Calu3 (cell line): ENCODE measurements at regions of chr1 and their contacts with region 1.

Region 1: DNA sequence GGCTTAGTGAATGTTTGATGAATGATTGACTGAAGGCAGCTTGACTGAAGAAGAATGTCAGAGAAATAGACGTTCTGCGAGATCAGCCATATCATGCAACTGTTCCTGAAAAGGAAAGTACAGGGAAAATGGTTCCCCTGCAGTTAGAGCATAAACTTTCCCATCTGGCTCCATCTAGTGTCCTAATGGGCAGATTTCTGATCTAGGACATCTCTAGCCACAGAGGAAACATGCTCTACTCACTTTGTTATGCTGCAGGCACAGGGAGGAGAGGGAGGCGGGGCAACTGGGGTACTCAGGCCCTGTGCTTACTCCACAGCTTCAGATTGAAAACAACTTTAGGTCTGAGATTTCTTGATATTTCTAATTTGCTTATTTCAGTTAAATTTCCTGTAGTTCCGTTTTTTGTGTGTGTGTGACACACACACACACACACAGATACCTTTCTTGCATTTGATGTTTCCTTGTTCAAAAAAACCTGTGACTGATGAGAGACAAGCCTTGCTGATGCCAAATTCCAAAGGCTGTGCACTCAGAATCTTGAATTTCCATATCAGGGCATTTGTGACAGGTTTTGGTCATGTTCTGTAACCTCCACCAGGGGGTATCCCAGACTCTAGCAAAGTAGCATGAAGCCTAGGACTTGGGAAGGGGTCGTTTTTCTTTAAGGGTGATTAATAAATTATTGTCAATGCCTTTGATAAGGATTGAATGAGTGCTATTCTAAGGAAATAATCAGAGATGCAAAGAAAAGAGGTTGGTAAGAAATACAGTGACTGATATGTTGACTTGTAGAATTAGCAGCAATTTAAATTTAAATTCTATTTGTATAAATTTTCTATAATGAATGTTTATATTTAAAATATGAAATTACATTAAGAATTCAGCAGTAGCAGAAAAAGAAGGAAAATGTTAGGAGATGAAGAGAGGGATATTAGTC is 139.7 kb upstream of the BEND5 start:
- DNase-seq: peak; percentile 53
- H3K4me3 Mint-ChIP-seq: no peak overlapping the region
- H3K27ac Mint-ChIP-seq: peak overlapping the region; percentile 5
- H3K4me1 Mint-ChIP-seq: peaks cover 17% of the 10 kb centered on the region
- H3K27me3 Mint-ChIP-seq: no peaks in the 10 kb centered on the region
- CTCF ChIP-seq: peak; percentile 46

Region 2: GRCh38 chr1:48853006-48853405 is 63.4 kb before region 1 on chr1:
- CTCF ChIA-PET with region 1: no interaction called
- intact Hi-C with region 1: loop called (anchors 10 kb)
- DNase-seq: no peak
- H3K4me3 Mint-ChIP-seq: no peak overlapping the region
- H3K27ac Mint-ChIP-seq: no peak overlapping the region
- H3K4me1 Mint-ChIP-seq: no peaks in the 10 kb centered on the region
- H3K27me3 Mint-ChIP-seq: no peaks in the 10 kb centered on the region
- CTCF ChIP-seq: no peak

Region 3: GRCh38 chr1:49229555-49229954 is 313.2 kb after region 1 on chr1:
- CTCF ChIA-PET with region 1: no interaction called
- intact Hi-C with region 1: loop called (anchors 5 kb)
- DNase-seq: peak; percentile 60
- H3K4me3 Mint-ChIP-seq: no peak overlapping the region
- H3K27ac Mint-ChIP-seq: no peak overlapping the region
- H3K4me1 Mint-ChIP-seq: peaks cover 19% of the 10 kb centered on the region
- H3K27me3 Mint-ChIP-seq: no peaks in the 10 kb centered on the region
- CTCF ChIP-seq: no peak

Region 4: DNA sequence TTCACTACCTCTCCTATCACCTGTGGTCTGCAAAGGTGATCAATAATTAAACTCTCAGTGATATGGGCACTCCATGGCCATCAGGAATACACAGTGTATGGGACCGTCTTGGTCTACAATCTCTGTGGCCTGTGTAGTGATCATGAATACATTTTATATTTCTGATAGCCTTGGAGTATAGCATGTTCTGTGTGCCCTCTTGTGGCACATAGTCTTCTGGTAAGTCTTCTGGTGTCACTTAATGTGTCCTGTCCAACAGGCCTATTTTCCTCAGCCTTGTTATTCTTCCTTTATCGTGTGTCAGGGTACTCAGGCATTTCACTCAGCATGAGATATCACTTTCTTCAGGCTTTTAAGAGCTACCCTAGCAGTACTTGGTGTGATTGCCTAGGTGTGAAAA is 713.8 kb after region 1 on chr1:
- CTCF ChIA-PET with region 1: interaction called, 3 read pairs
- intact Hi-C with region 1: loop called (anchors 1 kb)
- DNase-seq: peak; percentile 14
- H3K4me3 Mint-ChIP-seq: no peak overlapping the region
- H3K27ac Mint-ChIP-seq: no peak overlapping the region
- H3K4me1 Mint-ChIP-seq: peaks cover 13% of the 10 kb centered on the region
- H3K27me3 Mint-ChIP-seq: no peaks in the 10 kb centered on the region
- CTCF ChIP-seq: no peak

Region 5: GRCh38 chr1:50080909-50081586 is 1164.6 kb after region 1 on chr1:
- CTCF ChIA-PET with region 1: interaction called, 3 read pairs
- intact Hi-C with region 1: loop called (anchors 2 kb)
- DNase-seq: peak; percentile 49
- H3K4me3 Mint-ChIP-seq: no peak overlapping the region
- H3K27ac Mint-ChIP-seq: no peak overlapping the region
- H3K4me1 Mint-ChIP-seq: no peaks in the 10 kb centered on the region
- H3K27me3 Mint-ChIP-seq: no peaks in the 10 kb centered on the region
- CTCF ChIP-seq: peak; percentile 34